Activated B cell treated with CpG ODN at 0.5 μM for 24 hours (primary cell): ENCODE measurements at regions of chr1 and their contacts with region 1.

Region 1: DNA sequence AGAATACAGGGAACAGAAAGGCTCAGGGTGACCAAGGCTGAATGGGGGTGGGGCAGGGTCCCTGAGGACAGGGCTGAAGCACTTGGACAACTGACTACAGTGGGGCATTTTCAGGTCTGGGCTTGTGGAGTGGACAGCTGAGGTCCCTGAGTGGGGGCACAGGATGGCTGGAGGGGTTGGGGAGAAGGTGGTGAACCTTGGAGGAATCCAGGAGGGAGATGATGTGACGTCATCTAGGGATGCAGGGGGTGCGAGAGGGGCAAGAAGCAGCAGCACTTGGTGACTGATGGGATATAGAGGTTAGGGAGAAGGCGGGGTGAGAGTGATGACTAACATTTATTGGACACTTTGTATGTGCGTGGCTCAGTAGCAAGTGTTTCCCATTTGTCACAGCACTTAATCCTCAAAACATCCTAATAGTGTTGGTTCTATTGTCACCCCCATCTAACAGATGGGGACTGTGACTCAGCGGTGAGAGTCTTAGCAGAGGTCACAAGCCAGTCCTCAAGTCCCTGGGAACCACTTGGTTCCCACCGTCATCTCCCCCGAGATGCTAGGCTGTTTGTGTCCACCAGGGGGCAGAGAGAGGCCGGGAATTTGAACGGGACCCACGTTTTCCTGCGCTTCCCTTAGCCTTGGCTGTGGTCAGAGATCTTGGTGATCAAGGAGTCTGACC is 27.9 kb upstream of the BMP8B start:
- DNase-seq: peak; percentile 55
- ATAC-seq: peak; percentile 54
- H3K4me3 Mint-ChIP-seq: peak overlapping the region; percentile 77
- H3K27ac Mint-ChIP-seq: peak overlapping the region; percentile 86
- H3K4me1 Mint-ChIP-seq: peaks cover 13% of the 10 kb centered on the region
- H3K27me3 Mint-ChIP-seq: no peaks in the 10 kb centered on the region
- CTCF ChIP-seq: peak; percentile 60

Region 2: GRCh38 chr1:39754906-39755504 is 61.5 kb before region 1 on chr1:
- CTCF ChIA-PET with region 1: no interaction called
- POLR2A ChIA-PET with region 1: no interaction called
- intact Hi-C with region 1: no loop called
- DNase-seq: no peak
- ATAC-seq: no peak
- H3K4me3 Mint-ChIP-seq: no peak overlapping the region
- H3K27ac Mint-ChIP-seq: no peak overlapping the region
- H3K4me1 Mint-ChIP-seq: no peaks in the 10 kb centered on the region
- H3K27me3 Mint-ChIP-seq: no peaks in the 10 kb centered on the region
- CTCF ChIP-seq: no peak

Region 3: GRCh38 chr1:39799770-39800470 is 16.6 kb before region 1 on chr1:
- CTCF ChIA-PET with region 1: no interaction called
- POLR2A ChIA-PET with region 1: interaction called, 11 read pairs
- intact Hi-C with region 1: no loop called
- DNase-seq: peak; percentile 64
- ATAC-seq: peak; percentile 68
- H3K4me3 Mint-ChIP-seq: peak overlapping the region; percentile 81
- H3K27ac Mint-ChIP-seq: peak overlapping the region; percentile 93
- H3K4me1 Mint-ChIP-seq: peaks cover 11% of the 10 kb centered on the region
- H3K27me3 Mint-ChIP-seq: no peaks in the 10 kb centered on the region
- CTCF ChIP-seq: no peak

Region 4: GRCh38 chr1:39866767-39867166 is 50.2 kb after region 1 on chr1:
- CTCF ChIA-PET with region 1: no interaction called
- POLR2A ChIA-PET with region 1: no interaction called
- intact Hi-C with region 1: no loop called
- DNase-seq: no peak
- ATAC-seq: no peak
- H3K4me3 Mint-ChIP-seq: no peak overlapping the region
- H3K27ac Mint-ChIP-seq: no peak overlapping the region
- H3K4me1 Mint-ChIP-seq: peaks cover 5% of the 10 kb centered on the region
- H3K27me3 Mint-ChIP-seq: no peaks in the 10 kb centered on the region
- CTCF ChIP-seq: no peak

Region 5: DNA sequence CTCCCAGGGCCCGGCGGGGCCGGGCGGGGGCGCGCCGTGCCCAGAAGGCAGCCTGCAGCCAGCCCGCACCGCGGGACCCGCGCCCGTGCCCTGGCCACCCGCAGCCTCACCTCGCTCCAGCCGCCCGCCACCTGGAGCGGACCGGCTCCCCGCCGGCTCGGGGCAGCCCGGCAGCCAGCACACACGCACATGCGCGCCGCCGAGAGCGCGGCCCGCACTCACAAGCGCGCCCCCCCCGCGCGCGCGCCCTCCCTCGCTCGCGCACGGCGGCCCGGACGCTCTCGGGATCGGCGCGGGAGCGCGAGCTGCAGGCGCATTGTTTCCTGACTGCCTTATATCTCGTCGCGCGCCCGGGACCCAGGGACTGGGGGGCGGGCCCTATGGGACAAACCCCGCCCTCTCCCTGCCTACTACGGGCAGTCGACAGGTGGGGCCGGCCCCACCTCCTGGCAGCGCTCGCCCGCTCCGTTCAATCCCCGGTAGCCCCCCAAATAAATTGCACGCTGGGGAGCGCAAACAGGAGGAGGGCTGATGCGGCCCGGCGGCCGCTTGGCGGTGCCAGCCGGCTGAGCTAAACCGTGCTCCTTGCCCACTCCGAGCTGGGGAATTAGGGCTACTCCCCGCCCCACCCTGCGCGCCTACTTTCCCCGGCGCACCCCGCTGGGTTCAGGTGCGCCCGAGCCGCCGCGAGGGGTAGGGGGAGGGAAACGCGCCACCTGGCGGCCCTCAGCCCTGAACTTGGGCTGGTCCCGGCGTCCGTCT is 85.3 kb after region 1 on chr1 and contains the start of gene MYCL:
- CTCF ChIA-PET with region 1: interaction called, 12 read pairs
- POLR2A ChIA-PET with region 1: interaction called, 6 read pairs
- intact Hi-C with region 1: loop called (anchors 1 kb)
- DNase-seq: peak; percentile 63
- ATAC-seq: peak; percentile 81
- H3K4me3 Mint-ChIP-seq: peak within 1 kb of the TSS; percentile 75
- H3K27ac Mint-ChIP-seq: no peak within 1 kb of the TSS
- H3K4me1 Mint-ChIP-seq: peaks cover 6% of the 10 kb centered on the region
- H3K27me3 Mint-ChIP-seq: peaks cover 42% of the 10 kb centered on the region
- CTCF ChIP-seq: peak; percentile 46
- total RNA-seq, gene MYCL: 0.10 and 0.29 TPM in 2 replicates

Region 6: DNA sequence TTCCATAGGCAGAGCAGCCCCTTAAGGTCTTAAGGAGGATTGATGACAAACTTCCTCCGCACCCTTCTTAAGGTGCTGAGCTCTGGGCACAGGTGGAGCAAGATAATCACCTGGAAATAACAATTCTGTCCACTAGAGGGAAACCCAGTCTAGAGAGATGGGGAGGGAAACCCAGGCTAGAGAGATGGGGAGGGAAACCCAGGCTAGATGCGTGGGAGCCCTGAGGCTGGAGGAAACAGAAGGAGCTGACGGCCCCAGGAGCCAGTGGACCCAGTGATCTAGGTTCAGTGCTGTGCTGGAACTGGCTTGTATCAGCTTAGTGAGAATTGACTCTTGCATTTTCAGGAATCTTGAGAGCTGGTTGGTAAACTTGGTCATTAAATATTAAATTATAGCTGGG is 103.0 kb after region 1 on chr1:
- CTCF ChIA-PET with region 1: interaction called, 4 read pairs
- POLR2A ChIA-PET with region 1: interaction called, 5 read pairs
- intact Hi-C with region 1: loop called (anchors 5 kb)
- DNase-seq: peak; percentile 22
- ATAC-seq: peak; percentile 99
- H3K4me3 Mint-ChIP-seq: no peak overlapping the region
- H3K27ac Mint-ChIP-seq: no peak overlapping the region
- H3K4me1 Mint-ChIP-seq: peaks cover 2% of the 10 kb centered on the region
- H3K27me3 Mint-ChIP-seq: no peaks in the 10 kb centered on the region
- CTCF ChIP-seq: no peak

Region 7: GRCh38 chr1:39954816-39955546 is 138.4 kb after region 1 on chr1 and contains the start of gene MFSD2A:
- CTCF ChIA-PET with region 1: interaction called, 3 read pairs
- POLR2A ChIA-PET with region 1: interaction called, 3 read pairs
- intact Hi-C with region 1: loop called (anchors 1 kb)
- DNase-seq: peak; percentile 85
- ATAC-seq: peak; percentile 94
- H3K4me3 Mint-ChIP-seq: peak within 1 kb of the TSS; percentile 95
- H3K27ac Mint-ChIP-seq: peak within 1 kb of the TSS; percentile 86
- H3K4me1 Mint-ChIP-seq: peaks cover 41% of the 10 kb centered on the region
- H3K27me3 Mint-ChIP-seq: no peaks in the 10 kb centered on the region
- CTCF ChIP-seq: no peak
- total RNA-seq, gene MFSD2A: 30.3 and 36.0 TPM in 2 replicates

Region 8: GRCh38 chr1:39973503-39974135 is 157.1 kb after region 1 on chr1:
- CTCF ChIA-PET with region 1: interaction called, 38 read pairs
- POLR2A ChIA-PET with region 1: interaction called, 3 read pairs
- intact Hi-C with region 1: loop called (anchors 1 kb)
- DNase-seq: peak; percentile 58
- ATAC-seq: peak; percentile 86
- H3K4me3 Mint-ChIP-seq: no peak overlapping the region
- H3K27ac Mint-ChIP-seq: no peak overlapping the region
- H3K4me1 Mint-ChIP-seq: peaks cover 8% of the 10 kb centered on the region
- H3K27me3 Mint-ChIP-seq: no peaks in the 10 kb centered on the region
- CTCF ChIP-seq: peak; percentile 79

Region 9: DNA sequence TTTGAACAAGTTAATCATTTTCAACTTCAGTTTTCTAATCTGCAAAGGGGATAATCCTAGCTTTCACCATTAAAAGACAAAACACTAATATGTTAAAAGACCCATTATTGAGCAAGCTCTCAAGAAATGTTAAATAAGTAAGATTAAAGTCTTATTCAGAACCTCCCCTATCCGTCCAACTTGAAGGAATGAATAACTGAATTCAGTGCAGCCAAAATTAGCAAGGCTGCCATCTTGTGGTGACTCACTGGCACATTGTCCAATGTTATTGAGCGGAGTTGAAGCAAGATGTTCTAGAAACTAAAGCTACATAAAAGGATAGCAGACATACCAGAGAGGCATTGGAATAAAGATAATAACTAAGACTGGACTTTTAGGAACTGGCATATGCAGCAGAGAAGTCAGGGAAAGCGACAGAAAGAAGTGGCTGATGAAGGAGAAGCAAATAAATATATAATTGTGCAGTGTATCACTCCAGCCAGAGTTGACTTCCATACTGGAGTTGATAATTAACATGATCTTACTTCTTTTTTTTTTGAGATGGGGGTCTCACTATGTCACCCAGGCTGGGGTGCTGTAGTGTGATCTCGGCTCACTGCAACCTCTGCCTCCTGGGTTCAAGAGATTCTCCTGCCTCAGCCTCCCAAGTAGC is 215.8 kb after region 1 on chr1:
- CTCF ChIA-PET with region 1: interaction called, 7 read pairs
- POLR2A ChIA-PET with region 1: no interaction called
- intact Hi-C with region 1: loop called (anchors 1 kb)
- DNase-seq: no peak
- ATAC-seq: peak; percentile 76
- H3K4me3 Mint-ChIP-seq: no peak overlapping the region
- H3K27ac Mint-ChIP-seq: no peak overlapping the region
- H3K4me1 Mint-ChIP-seq: peaks cover 45% of the 10 kb centered on the region
- H3K27me3 Mint-ChIP-seq: no peaks in the 10 kb centered on the region
- CTCF ChIP-seq: peak; percentile 34